HAP-1 (cell line): ENCODE measurements at regions of chr1 and their contacts with region 1.

Region 1: DNA sequence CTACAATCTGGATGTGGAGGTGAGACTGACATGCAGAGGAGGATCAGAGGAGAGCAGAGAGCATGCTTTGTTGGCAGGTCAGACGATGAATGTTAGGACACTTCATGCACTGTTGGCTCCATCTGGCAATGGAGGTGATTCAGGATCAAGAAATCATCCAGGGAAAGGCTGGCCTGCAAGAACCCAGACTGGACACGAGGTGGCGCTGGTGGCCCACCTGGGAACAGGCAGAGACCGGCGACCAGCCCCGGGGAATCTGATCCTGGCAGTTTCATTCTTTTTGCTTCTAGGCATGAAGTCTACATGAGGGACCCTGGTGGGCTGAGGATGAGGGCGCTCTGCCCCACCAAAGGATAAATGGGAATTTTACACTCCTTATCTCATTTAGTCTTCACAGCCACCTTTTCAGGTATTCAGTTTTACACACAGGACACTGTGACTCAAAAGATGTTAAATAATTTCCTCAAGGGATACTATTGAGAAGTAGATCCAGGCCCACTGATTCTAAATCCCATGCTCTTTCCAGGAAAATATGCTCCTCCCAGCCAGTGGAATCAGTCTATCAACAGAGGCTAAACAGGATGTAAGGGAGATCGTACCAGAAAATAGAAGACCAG is 26.2 kb upstream of the SCMH1 start:
- DNase-seq: peak; percentile 66 to 85
- H3K4me3 ChIP-seq: no peak overlapping the region
- H3K4me1 ChIP-seq: no peaks in the 10 kb centered on the region
- H3K27me3 ChIP-seq: no peaks in the 10 kb centered on the region

Region 2: DNA sequence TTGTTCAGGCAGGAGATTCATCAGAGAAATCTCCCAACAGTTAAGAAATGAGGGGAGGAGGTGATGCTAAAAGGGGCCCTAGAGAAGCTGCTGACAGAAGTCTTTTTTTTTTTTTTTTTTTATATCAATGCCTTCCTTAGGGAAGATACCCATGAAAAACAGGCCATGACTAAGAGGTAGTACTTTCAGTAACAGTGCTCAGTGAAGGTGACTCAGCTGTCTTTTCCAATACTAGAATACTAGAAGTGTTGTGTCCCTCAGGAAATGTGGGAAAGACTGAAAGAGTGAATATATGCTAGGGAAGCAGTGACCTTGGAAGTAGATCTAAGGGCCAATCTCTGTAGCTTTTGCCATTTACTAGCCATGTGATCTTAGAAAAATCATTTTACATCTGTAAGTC is 194.3 kb before region 1 on chr1:
- in situ Hi-C with region 1: no loop called
- DNase-seq: no peak
- H3K4me3 ChIP-seq: no peak overlapping the region
- H3K4me1 ChIP-seq: no peaks in the 10 kb centered on the region
- H3K27me3 ChIP-seq: no peaks in the 10 kb centered on the region

Region 3: GRCh38 chr1:41322835-41323627 is 54.8 kb after region 1 on chr1:
- in situ Hi-C with region 1: no loop called
- DNase-seq: peak in 1 of 2 experiments; percentile 56
- H3K4me3 ChIP-seq: no peak overlapping the region
- H3K4me1 ChIP-seq: peaks cover 4% of the 10 kb centered on the region; the same call in 1 of the 2 replicates
- H3K27me3 ChIP-seq: no peaks in the 10 kb centered on the region; the same call in 1 of the 2 replicates

Region 4: DNA sequence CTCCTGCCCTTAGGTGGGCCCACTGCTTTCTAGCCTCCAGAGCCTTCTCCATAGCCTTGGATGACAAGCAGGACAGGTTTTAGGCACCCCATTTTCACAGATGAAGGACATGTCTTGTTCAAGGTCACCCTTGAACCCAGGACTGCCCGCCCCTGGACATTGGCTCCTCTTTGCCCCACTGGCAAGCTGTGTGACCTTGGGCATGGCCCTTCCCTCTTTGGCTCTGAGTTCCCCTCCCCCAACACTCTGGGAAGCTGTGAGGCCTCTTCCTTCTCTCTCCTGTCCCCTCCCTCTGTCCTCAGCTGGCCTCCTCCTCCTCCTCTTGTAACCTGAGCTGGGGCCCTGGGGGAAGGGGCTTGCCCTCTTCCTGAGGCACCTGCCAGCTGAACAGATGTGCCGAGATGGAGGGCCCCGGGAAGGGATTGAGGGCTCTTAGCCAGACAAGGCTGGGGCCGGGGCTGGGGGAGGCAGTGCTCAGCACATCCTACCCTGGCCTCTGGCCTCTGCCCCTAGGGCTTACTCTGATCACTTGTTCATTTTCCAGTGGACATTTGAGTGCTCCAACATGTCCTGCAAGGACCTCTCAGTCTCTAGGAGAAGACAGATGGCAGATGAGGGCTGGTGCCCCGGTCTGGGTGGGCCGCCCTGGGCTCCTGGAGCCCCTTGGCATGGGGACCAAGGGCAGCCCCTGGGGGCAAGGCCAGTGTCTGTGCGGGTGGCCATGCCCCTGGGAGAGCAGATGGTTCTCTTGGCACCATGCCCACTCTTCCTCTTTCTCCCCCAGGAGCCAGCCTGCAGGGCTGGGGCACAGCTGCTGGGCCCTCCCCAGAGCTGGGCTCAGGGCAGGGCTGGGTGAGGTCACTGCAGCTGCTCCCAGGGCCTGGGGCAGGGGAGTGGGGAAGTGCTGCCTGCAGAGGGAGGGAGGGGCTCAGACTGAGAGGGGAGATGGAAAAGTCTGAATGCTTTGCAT is 103.7 kb after region 1 on chr1:
- in situ Hi-C with region 1: no loop called
- DNase-seq: peak; percentile 44 to 83
- H3K4me3 ChIP-seq: no peak overlapping the region
- H3K4me1 ChIP-seq: peaks cover 17% of the 10 kb centered on the region
- H3K27me3 ChIP-seq: no peaks in the 10 kb centered on the region

Region 5: DNA sequence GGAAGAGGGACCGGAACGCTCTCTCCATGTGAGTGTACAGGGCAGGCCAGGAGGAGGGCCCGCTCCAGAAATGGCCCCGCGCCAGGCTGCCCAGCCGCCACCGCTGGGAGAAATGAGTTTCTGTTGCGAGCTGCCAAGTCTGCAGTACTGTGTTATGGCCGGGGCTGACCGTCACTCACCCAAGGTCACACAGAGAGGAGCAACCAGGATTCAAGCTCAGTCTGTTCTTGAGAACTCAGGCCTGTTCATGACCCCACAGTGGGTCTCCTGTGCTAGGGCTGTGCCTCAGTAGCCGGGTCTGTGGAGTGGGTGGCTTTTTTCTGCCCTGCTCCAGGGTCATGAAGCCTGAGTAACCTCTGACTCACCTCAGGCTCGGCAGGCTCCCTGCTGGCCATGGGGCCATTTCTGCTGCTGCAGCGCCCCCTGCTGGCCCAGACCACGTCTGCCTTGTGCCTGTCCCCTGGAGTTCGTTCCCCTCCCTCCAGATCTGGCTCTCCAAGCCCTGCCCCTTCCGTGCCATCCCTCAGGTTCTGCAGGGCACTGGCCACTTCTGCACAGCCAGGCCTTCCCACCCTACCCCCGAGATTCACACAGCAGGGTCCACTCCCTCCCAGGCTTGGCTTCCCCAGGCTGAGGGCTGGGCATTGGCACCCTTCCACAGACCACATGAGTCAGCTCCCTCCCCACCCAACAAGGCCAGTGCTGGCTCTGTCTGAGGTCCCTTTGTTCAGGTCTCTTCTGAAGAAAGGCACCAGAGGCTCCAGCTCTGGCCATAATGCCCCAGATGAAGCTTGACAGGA is 164.4 kb after region 1 on chr1:
- in situ Hi-C with region 1: loop called (anchors 5 kb)
- DNase-seq: peak; percentile 63 to 91
- H3K4me3 ChIP-seq: no peak overlapping the region
- H3K4me1 ChIP-seq: peaks cover 5% of the 10 kb centered on the region; the same call in 1 of the 2 replicates
- H3K27me3 ChIP-seq: no peaks in the 10 kb centered on the region; the same call in 1 of the 2 replicates

Region 6: DNA sequence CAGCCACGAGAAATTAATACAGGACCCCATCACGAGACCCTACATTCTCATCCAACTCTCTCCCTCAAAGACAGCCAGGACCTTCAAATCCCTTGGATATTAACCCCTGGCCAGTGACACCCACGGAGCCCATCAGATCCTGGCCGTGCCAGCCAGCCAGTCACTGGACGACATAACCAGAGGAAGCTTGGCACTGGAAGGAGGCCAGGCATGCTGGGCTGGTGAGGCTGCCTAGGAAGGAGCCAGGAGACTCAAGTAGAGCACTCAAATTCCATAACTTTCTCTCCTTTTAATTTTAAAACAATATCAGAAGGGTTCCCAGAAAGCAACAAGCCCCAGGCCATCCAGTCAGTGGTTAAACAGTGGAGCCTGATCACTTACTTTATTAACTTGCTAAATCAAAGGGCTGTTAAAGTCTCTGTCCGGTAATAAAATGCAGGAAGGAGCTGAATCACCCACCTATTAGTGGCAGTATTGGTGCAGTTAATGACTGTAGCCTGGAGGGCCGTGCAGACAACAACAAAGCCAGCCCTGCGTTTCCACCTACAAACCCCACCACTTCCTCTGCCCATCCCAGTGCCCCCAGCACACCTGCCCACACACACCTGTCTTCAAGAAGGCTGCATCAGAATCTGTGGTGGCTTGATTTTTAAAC is 572.5 kb after region 1 on chr1:
- in situ Hi-C with region 1: no loop called
- DNase-seq: no peak
- H3K4me3 ChIP-seq: no peak overlapping the region
- H3K4me1 ChIP-seq: no peaks in the 10 kb centered on the region
- H3K27me3 ChIP-seq: no peaks in the 10 kb centered on the region